Naive thymus-derived CD4-positive, alpha-beta T cell (primary cell): ENCODE measurements at regions of chr14 and their contacts with region 1.

Region 1: GRCh38 chr14:50156111-50156510 is 39.7 kb upstream of the VCPKMT start:
- DNase-seq: no peak
- ATAC-seq: no peak
- H3K4me3 ChIP-seq: no peak overlapping the region
- H3K4me3 Mint-ChIP-seq: no peak overlapping the region
- H3K27ac ChIP-seq: no peak overlapping the region
- H3K27ac Mint-ChIP-seq: peak overlapping the region in 1 of 9 donors; percentile 4
- H3K4me1 ChIP-seq: no peaks in the 10 kb centered on the region
- H3K4me1 Mint-ChIP-seq: peaks cover 0 to 2% (median 0%) of the 10 kb centered on the region in 7 donors
- H3K27me3 ChIP-seq: no peaks in the 10 kb centered on the region
- H3K27me3 Mint-ChIP-seq: no peaks in the 10 kb centered on the region

Region 2: DNA sequence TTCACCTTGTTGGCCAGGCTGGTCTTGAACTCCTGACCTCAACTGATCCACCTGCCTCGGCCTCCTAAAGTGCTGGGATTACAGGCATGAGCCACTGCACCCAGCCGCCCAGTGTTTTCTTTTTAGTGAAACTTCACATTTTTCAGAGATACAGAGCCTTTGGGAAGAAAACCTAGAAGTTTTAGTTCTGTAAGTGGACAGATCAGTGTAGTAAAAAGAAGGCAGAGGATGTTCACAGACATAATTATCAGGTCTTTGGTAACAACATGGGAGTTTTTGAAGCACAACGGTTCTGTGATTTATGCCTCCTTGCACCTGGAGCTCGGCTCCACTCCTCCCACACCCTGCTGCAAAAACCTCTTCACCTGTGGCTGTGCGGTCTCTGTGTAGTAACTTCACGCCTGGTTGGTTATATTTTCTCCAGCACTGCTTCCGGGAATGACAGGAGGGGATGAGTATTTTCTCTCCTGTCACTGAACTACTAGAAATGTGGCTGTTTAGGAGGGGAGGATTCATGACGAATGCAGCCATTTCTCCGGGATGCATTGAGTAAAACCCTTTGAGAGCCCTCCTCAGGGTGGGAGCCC is 196.2 kb before region 1 on chr14:
- CTCF ChIA-PET with region 1: no interaction called
- POLR2A ChIA-PET with region 1: no interaction called
- intact Hi-C with region 1: no loop called
- DNase-seq: peak in 7 of 9 donors; percentile 19 to 51 (median 35)
- ATAC-seq: peak; percentile 70
- H3K4me3 ChIP-seq: no peak overlapping the region
- H3K4me3 Mint-ChIP-seq: peak overlapping the region in 9 of 10 donors; percentile 13 to 72 (median 59)
- H3K27ac ChIP-seq: peak overlapping the region; percentile 32
- H3K27ac Mint-ChIP-seq: peak overlapping the region; percentile 57 to 85 (median 79)
- H3K4me1 ChIP-seq: peaks cover 0 to 17% of the 10 kb centered on the region in 2 donors
- H3K4me1 Mint-ChIP-seq: peaks cover 13 to 43% (median 31%) of the 10 kb centered on the region in 7 donors
- H3K27me3 ChIP-seq: no peaks in the 10 kb centered on the region
- H3K27me3 Mint-ChIP-seq: no peaks in the 10 kb centered on the region

Region 3: GRCh38 chr14:50139192-50139591 is 16.9 kb before region 1 on chr14:
- CTCF ChIA-PET with region 1: no interaction called
- POLR2A ChIA-PET with region 1: no interaction called
- intact Hi-C with region 1: no loop called
- DNase-seq: no peak
- ATAC-seq: no peak
- H3K4me3 ChIP-seq: no peak overlapping the region
- H3K4me3 Mint-ChIP-seq: no peak overlapping the region
- H3K27ac ChIP-seq: no peak overlapping the region
- H3K27ac Mint-ChIP-seq: no peak overlapping the region
- H3K4me1 ChIP-seq: no peaks in the 10 kb centered on the region
- H3K4me1 Mint-ChIP-seq: no peaks in the 10 kb centered on the region
- H3K27me3 ChIP-seq: no peaks in the 10 kb centered on the region
- H3K27me3 Mint-ChIP-seq: no peaks in the 10 kb centered on the region

Region 4: DNA sequence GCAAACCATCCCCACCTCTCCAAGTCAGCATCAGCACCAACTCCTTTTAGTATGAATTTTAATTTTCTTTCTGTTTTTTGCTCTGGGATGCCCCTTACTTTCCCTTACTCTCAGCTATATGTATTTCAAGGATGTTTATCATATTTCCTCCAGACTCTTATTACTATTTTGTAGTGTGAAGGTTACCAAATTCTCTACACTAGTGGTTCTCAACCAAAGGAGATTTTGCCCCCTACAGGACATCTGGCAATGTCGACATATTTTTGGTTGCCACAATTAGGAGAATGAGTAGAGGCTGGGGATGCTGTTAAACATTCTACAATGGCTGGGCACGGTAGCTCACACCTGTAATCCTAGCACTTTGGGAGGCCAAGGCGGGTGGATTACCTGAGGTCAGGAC is 104.4 kb after region 1 on chr14:
- CTCF ChIA-PET with region 1: no interaction called
- POLR2A ChIA-PET with region 1: no interaction called
- intact Hi-C with region 1: loop called in 1 of 2 experiments (anchors 10 kb)
- DNase-seq: peak in 7 of 9 donors; percentile 10 to 46 (median 26)
- ATAC-seq: peak; percentile 67
- H3K4me3 ChIP-seq: no peak overlapping the region
- H3K4me3 Mint-ChIP-seq: no peak overlapping the region
- H3K27ac ChIP-seq: no peak overlapping the region
- H3K27ac Mint-ChIP-seq: peak overlapping the region in 3 of 9 donors; percentile 4 to 16 (median 8)
- H3K4me1 ChIP-seq: no peaks in the 10 kb centered on the region
- H3K4me1 Mint-ChIP-seq: peaks cover 0 to 8% (median 0%) of the 10 kb centered on the region in 7 donors
- H3K27me3 ChIP-seq: no peaks in the 10 kb centered on the region
- H3K27me3 Mint-ChIP-seq: no peaks in the 10 kb centered on the region